ENCODE measurements at regions of chr1 and their contacts with region 1.

Region 1: GRCh38 chr1:235105051-235106043 is 23.3 kb downstream of the TOMM20 start:
- DNase-seq: peak; percentile 76
- H3K4me3 Mint-ChIP-seq: peak overlapping the region; percentile 83
- H3K27ac Mint-ChIP-seq: peak overlapping the region; percentile 93
- H3K4me1 Mint-ChIP-seq: peaks cover 34% of the 10 kb centered on the region
- H3K27me3 Mint-ChIP-seq: no peaks in the 10 kb centered on the region

Region 2: GRCh38 chr1:235128456-235129328 is 23.3 kb after region 1 on chr1 and contains the start of gene TOMM20:
- intact Hi-C with region 1: loop called (anchors 2 kb)
- DNase-seq: peak; percentile 98
- H3K4me3 Mint-ChIP-seq: peak within 1 kb of the TSS; percentile 98
- H3K27ac Mint-ChIP-seq: peak within 1 kb of the TSS; percentile 99
- H3K4me1 Mint-ChIP-seq: peaks cover 28% of the 10 kb centered on the region
- H3K27me3 Mint-ChIP-seq: peaks cover 2% of the 10 kb centered on the region
- total RNA-seq, gene TOMM20: 119 and 140 TPM in 2 replicates

Region 3: GRCh38 chr1:235160957-235161684 is 55.8 kb after region 1 on chr1 and contains the start of gene RBM34:
- intact Hi-C with region 1: loop called (anchors 2 kb)
- DNase-seq: peak; percentile 98
- H3K4me3 Mint-ChIP-seq: peak within 1 kb of the TSS; percentile 93
- H3K27ac Mint-ChIP-seq: peak within 1 kb of the TSS; percentile 94
- H3K4me1 Mint-ChIP-seq: peaks cover 12% of the 10 kb centered on the region
- H3K27me3 Mint-ChIP-seq: no peaks in the 10 kb centered on the region
- total RNA-seq, gene RBM34: 123 and 135 TPM in 2 replicates

Region 4: GRCh38 chr1:235206533-235207208 is 101.3 kb after region 1 on chr1:
- intact Hi-C with region 1: loop called (anchors 2 kb)
- DNase-seq: peak; percentile 68
- H3K4me3 Mint-ChIP-seq: peak overlapping the region; percentile 29
- H3K27ac Mint-ChIP-seq: peak overlapping the region; percentile 89
- H3K4me1 Mint-ChIP-seq: peaks cover 19% of the 10 kb centered on the region
- H3K27me3 Mint-ChIP-seq: no peaks in the 10 kb centered on the region

Region 5: DNA sequence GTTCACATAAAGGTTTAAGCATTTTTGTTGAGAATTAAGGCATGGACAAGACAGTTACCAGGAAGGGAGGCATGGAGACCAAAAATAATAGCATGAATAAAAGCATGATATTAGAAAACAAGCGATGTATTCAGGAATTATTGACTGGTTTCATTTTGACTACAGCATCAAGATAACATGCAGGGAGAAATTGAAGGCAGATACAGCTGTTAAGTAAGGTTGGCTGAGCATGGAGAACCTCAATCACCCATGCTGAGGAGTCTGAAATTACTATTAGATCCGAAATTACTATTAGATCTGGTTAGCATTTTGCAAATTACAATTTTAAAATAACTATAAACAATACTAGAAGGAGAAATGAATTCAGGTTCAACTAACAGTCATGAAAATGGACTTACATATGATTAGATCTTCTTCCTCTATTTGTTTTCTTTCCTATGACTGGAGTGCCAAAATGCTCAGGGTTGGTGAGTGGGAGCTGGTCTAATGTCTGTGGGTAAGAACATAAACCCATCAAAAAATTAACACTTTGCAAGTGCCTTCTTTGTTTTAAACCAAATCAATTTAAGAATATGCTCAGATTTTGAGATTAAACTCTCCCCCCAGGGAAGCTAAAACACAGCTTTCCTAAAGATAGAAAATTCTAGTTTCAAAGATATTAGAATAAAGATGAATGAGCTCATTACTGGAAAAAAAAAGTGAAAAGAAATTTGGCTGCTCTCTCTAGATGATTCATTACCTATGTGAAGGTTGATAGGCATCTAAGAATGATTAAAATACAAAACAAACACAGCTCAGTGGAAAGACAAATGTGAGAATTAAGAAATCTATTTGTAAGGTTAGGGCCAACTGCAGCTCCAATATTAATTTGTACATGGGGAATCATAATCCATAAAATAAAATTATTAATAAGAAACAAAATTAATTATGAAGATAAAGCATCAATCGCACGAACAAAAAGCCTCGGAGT is 141.0 kb after region 1 on chr1:
- intact Hi-C with region 1: loop called (anchors 10 kb)
- DNase-seq: no peak
- H3K4me3 Mint-ChIP-seq: peak overlapping the region; percentile 34
- H3K27ac Mint-ChIP-seq: peak overlapping the region; percentile 64
- H3K4me1 Mint-ChIP-seq: peaks cover 35% of the 10 kb centered on the region
- H3K27me3 Mint-ChIP-seq: no peaks in the 10 kb centered on the region

Region 6: DNA sequence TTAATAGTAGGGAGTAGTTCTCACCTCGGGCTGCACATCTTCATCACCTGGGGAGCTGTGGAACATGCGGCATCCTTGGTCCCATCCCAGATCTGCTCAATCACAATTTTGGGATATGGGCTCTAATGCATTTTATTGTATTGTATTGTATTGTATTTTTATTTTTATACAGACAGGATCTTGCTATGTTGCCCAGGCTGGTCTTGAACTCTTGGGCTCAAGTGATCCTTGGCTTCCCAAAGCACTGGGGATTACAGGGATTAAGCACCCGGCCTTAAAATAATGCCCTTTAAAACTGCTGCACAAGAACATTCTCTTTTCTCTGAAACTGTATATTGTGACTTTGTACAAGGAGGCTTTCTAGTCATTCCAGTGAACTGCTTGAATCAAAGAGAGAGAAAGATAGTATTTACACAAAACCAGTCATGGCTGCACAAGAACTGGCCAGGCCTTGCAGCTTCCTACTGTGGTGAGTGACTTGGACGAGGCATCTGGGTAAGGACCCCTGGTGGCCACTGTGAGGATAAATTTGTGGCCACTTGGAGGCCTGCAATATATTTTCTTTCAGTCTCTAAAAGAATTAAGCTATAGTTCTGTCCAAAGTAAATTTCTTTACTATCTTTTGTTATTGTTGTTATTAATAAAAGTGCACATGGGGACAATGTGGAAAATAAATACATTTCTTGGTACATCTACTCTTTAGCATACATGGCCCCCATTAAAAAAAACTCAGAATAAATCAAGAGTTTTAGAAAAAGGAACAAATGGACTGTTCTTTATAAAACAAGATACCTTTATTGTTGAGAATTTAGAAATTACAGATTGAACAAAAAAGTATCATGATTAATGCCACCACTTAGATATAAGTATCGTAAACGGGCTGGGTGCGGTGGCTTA is 309.9 kb after region 1 on chr1:
- intact Hi-C with region 1: loop called (anchors 1 kb)
- DNase-seq: peak; percentile 87
- H3K4me3 Mint-ChIP-seq: no peak overlapping the region
- H3K27ac Mint-ChIP-seq: no peak overlapping the region
- H3K4me1 Mint-ChIP-seq: peaks cover 6% of the 10 kb centered on the region
- H3K27me3 Mint-ChIP-seq: no peaks in the 10 kb centered on the region

Region 7: DNA sequence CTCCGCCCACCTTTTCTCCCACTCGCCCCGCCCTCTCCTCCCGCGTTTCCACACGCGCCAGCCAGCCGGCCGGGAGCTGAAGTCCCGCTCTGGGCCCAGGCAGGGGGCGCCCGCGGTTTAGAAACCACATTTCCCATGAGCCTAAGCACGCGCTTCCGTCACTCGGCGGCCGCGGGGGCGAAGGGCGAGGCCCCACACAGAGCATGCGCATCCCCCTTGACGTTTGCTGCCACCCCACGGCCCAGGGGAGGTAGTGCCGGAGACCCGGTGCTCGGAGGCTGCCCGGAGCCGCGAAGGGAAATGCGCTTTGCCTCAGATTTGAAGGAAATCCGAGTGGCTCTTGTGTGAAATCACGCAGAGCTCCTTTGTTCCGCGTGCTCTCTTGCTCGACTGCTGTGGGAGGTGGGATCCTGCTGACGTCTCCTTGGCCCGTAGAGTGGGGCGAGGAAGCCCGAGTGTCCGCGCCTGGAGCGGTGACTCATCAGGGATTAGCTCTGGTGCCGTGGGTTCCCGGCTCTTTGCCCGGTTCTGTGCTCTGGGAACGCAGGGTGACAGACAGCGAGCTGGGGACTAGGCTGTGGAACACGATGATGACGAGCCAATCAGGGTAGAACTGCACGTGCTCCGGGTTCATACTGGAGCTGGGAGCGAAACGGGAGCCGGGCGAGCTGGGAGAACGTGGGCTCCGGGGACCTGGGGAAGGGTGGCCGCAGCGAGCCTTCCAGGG is 399.3 kb after region 1 on chr1:
- intact Hi-C with region 1: loop called (anchors 10 kb)
- DNase-seq: peak; percentile 99
- H3K4me3 Mint-ChIP-seq: peak overlapping the region; percentile 95
- H3K27ac Mint-ChIP-seq: peak overlapping the region; percentile 97
- H3K4me1 Mint-ChIP-seq: peaks cover 25% of the 10 kb centered on the region
- H3K27me3 Mint-ChIP-seq: peaks cover 6% of the 10 kb centered on the region